Activated CD8-positive, alpha-beta memory T cell treated with anti-CD3 and anti-CD28 coated beads, Interleukin-2, amount 10 ng/mL, durations not matched to agents 7 days and 5 days (primary cell): ENCODE measurements at regions of chrX and their contacts with region 1.

Region 1: DNA sequence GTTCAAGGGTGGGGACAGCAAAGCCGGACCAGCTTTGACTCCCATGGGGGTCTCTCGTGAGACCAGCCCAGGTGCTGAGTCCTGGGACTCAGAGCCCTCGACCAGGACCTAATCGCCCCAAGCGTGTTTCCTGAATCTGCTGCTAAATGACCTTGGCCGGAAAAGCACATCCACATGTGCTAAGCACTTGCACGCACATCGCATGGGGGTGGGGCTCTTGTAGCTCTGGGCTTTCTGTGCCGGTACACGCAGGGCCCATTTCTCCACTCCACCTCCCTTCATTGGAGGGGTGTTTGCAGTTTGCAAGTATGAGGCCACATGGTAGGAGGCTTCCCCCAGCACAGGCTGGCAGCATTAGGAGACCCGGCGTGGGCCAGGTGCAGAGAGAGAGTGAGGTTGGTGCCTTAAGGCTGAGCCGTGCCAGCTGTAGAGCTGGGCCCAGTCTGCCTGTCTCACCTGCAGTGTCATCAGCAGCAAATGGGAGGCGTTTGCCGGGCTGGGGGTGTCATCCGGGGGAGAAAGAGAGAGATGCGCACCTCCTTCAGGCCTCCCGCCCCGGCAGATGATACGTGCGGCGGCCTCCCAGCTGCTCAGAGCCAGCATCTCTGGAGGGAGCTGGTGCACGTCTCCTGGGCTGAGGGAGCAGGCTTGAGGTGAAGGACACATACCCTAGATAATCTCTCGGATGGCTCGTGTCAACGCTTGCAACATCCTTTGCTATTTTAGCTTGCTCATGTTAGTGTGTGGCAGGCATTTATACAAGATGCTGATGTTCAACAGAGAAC is 45.2 kb upstream of the CLCN4 start:
- DNase-seq: peak; percentile 80
- ATAC-seq: peak; percentile 65
- H3K4me3 Mint-ChIP-seq: peak overlapping the region; percentile 74
- H3K27ac Mint-ChIP-seq: peak overlapping the region; percentile 99
- H3K4me1 Mint-ChIP-seq: peaks cover 67% of the 10 kb centered on the region
- H3K27me3 Mint-ChIP-seq: no peaks in the 10 kb centered on the region

Region 2: DNA sequence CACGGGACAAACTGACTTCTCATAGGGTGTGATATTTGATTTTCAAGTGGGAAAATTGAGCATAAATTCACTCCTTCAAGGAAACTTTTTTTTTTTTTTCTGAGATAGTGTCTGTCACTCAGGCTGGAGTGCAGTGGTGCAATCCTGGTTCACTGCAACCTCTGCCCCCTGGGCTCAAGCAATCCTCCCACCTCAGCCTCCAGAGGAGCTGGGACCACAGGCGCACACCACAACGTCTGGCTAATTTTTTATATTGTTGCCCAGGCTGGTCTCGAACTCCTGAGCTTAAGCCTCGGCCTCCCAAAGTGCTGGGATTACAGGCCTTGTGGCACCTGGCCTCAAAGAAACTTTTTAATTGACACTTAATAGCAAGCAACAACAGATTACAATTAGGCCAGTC is 130.6 kb before region 1 on chrX:
- CTCF ChIA-PET with region 1: no interaction called
- DNase-seq: no peak
- ATAC-seq: no peak
- H3K4me3 Mint-ChIP-seq: no peak overlapping the region
- H3K27ac Mint-ChIP-seq: no peak overlapping the region
- H3K4me1 Mint-ChIP-seq: no peaks in the 10 kb centered on the region
- H3K27me3 Mint-ChIP-seq: peaks cover 7% of the 10 kb centered on the region

Region 3: GRCh38 chrX:9995855-9996339 is 115.7 kb before region 1 on chrX:
- CTCF ChIA-PET with region 1: interaction called, 28 read pairs
- DNase-seq: peak; percentile 76
- ATAC-seq: peak; percentile 74
- H3K4me3 Mint-ChIP-seq: no peak overlapping the region
- H3K27ac Mint-ChIP-seq: no peak overlapping the region
- H3K4me1 Mint-ChIP-seq: peaks cover 17% of the 10 kb centered on the region
- H3K27me3 Mint-ChIP-seq: no peaks in the 10 kb centered on the region

Region 4: GRCh38 chrX:10086676-10087075 is 24.9 kb before region 1 on chrX:
- CTCF ChIA-PET with region 1: interaction called, 47 read pairs
- DNase-seq: no peak
- ATAC-seq: no peak
- H3K4me3 Mint-ChIP-seq: no peak overlapping the region
- H3K27ac Mint-ChIP-seq: peak overlapping the region; percentile 76
- H3K4me1 Mint-ChIP-seq: peaks cover 42% of the 10 kb centered on the region
- H3K27me3 Mint-ChIP-seq: no peaks in the 10 kb centered on the region

Region 5: GRCh38 chrX:10098270-10098713 is 13.3 kb before region 1 on chrX:
- CTCF ChIA-PET with region 1: interaction called, 12 read pairs
- DNase-seq: peak; percentile 78
- ATAC-seq: peak; percentile 87
- H3K4me3 Mint-ChIP-seq: peak overlapping the region; percentile 88
- H3K27ac Mint-ChIP-seq: peak overlapping the region; percentile 98
- H3K4me1 Mint-ChIP-seq: peaks cover 38% of the 10 kb centered on the region
- H3K27me3 Mint-ChIP-seq: no peaks in the 10 kb centered on the region